A673 (cell line): ENCODE measurements at regions of chr6 and their contacts with region 1.

Region 1: DNA sequence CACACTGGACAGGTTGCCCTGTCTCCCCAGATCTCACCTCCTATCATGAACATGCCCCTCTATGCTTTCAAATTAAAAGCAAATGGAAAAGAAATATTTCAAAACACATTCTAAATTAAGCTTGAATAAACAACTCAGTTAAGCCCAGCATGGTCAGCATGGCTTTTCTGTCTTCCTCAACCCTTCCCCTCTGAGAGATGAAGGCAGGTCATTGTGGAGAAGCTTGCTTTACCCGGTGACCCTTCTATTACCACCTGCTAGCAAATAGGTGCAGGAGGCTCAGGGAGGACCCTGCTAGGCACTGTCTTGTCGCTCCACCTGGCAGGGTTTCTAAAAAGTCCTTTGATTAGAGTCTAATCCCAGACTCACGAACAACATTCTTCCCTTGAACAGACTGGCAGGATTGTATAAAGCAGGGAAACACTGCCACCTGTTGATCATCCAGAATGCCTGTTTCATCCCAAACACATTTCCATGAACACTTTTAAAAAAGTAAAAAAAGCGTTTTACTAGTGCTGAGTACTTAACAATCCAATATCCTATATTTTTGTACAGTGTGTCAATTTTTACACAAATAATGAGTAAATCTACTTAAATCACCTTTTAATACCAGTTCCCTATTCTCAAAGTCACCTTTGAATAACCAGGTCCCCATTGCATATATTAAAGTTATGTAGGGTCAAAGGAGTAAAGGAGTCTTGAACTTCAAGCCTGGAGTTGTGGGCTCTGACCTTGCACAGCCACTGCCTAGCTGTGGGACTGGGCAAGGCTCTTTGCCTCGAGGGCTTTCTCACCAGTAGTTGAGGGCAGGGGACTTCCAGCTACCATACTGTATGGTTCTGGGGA is 75.5 kb downstream of the GPR6 start:
- DNase-seq: peak; percentile 74
- H3K4me3 ChIP-seq: no peak overlapping the region
- H3K27ac ChIP-seq: no peak overlapping the region
- H3K4me1 ChIP-seq: peaks cover 17% of the 10 kb centered on the region
- H3K27me3 ChIP-seq: no peaks in the 10 kb centered on the region
- CTCF ChIP-seq: peak; percentile 85

Region 2: GRCh38 chr6:110067837-110068591 is 14.4 kb after region 1 on chr6:
- CTCF ChIA-PET with region 1: interaction called, 16 read pairs
- POLR2A ChIA-PET with region 1: no interaction called
- intact Hi-C with region 1: no loop called
- DNase-seq: no peak
- H3K4me3 ChIP-seq: no peak overlapping the region
- H3K27ac ChIP-seq: no peak overlapping the region
- H3K4me1 ChIP-seq: peaks cover 6% of the 10 kb centered on the region
- H3K27me3 ChIP-seq: no peaks in the 10 kb centered on the region
- CTCF ChIP-seq: no peak

Region 3: GRCh38 chr6:110296241-110297025 is 242.8 kb after region 1 on chr6:
- CTCF ChIA-PET with region 1: no interaction called
- POLR2A ChIA-PET with region 1: no interaction called
- intact Hi-C with region 1: loop called (anchors 10 kb)
- DNase-seq: peak; percentile 92
- H3K4me3 ChIP-seq: peak overlapping the region; percentile 35
- H3K27ac ChIP-seq: peak overlapping the region; percentile 98
- H3K4me1 ChIP-seq: peaks cover 63% of the 10 kb centered on the region
- H3K27me3 ChIP-seq: no peaks in the 10 kb centered on the region
- CTCF ChIP-seq: no peak

Region 4: DNA sequence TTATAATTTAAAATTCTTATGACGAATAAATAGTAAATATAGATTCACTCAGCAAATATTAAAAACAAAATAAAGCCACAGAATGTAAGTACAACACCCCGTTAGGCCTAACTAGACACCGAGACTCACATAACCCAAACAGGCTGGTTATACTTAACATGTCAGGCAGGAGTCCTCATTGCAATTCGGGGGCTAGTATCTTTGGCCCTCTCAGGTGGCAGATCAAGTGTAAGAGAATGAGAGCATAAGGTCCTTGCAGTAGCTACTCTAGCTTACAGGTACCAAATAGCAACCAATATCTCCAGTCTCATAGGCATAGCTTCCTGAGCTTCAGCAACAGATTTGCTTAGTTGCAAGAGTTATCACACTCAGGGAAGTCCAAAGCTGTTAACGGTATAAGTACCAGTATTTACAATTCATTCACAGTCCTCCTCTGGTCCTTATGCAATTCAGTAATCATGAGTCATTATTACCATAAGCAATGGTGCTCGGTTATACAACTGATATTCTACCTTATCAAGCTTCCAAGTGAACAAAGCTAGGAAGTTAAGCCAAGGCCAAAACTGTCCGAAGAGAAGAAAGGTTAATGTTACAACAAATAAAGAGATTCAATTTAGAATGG is 1409.3 kb after region 1 on chr6:
- CTCF ChIA-PET with region 1: no interaction called
- POLR2A ChIA-PET with region 1: no interaction called
- intact Hi-C with region 1: no loop called
- DNase-seq: no peak
- H3K4me3 ChIP-seq: no peak overlapping the region
- H3K27ac ChIP-seq: no peak overlapping the region
- H3K4me1 ChIP-seq: peaks cover 5% of the 10 kb centered on the region
- H3K27me3 ChIP-seq: no peaks in the 10 kb centered on the region
- CTCF ChIP-seq: no peak